ENCODE measurements at regions of chr1 and their contacts with region 1.

Region 1: GRCh38 chr1:151839457-151840405 is at the start of gene C2CD4D:
- DNase-seq: peak in 1 of 2 donors; percentile 31
- ATAC-seq: peak; percentile 45 to 69 (median 58)
- H3K4me3 ChIP-seq: peak within 1 kb of the TSS in 9 of 10 donors; percentile 36 to 58 (median 50)
- H3K27ac ChIP-seq: peak within 1 kb of the TSS in 5 of 10 donors; percentile 20 to 56 (median 47)
- H3K4me1 ChIP-seq: peaks cover 6 to 29% (median 21%) of the 10 kb centered on the region in 9 donors
- H3K27me3 ChIP-seq: peaks cover 13 to 66% (median 44%) of the 10 kb centered on the region in 7 donors
- CTCF ChIP-seq: no peak
- total RNA-seq, gene C2CD4D: not detected

Region 2: GRCh38 chr1:151443846-151444782 is 395.6 kb before region 1 on chr1:
- intact Hi-C with region 1: loop called in 1 of 10 experiments (anchors 10 kb)
- DNase-seq: peak in 1 of 2 donors; percentile 64
- ATAC-seq: peak; percentile 62 to 91 (median 88)
- H3K4me3 ChIP-seq: no peak overlapping the region
- H3K27ac ChIP-seq: peak overlapping the region in 1 of 10 donors; percentile 43
- H3K4me1 ChIP-seq: peaks cover 3 to 66% (median 40%) of the 10 kb centered on the region in 9 donors
- H3K27me3 ChIP-seq: no peaks in the 10 kb centered on the region
- CTCF ChIP-seq: peak; percentile 30 to 83 (median 68)

Region 3: GRCh38 chr1:151534665-151535278 is 305.0 kb before region 1 on chr1:
- intact Hi-C with region 1: loop called in 3 of 10 experiments (anchors 5 to 10 kb)
- DNase-seq: peak; percentile 74 to 76
- ATAC-seq: peak; percentile 65 to 79 (median 70)
- H3K4me3 ChIP-seq: no peak overlapping the region
- H3K27ac ChIP-seq: no peak overlapping the region
- H3K4me1 ChIP-seq: peaks cover 0 to 9% (median 7%) of the 10 kb centered on the region in 9 donors
- H3K27me3 ChIP-seq: no peaks in the 10 kb centered on the region
- CTCF ChIP-seq: peak; percentile 65 to 90 (median 84)

Region 4: GRCh38 chr1:151585622-151586021 is 254.1 kb before region 1 on chr1:
- intact Hi-C with region 1: loop called in 5 of 10 experiments (anchors 5 to 10 kb)
- DNase-seq: no peak
- ATAC-seq: peak in 6 of 8 donors; percentile 53 to 68 (median 64)
- H3K4me3 ChIP-seq: no peak overlapping the region
- H3K27ac ChIP-seq: peak overlapping the region in 2 of 10 donors; percentile 13 to 43
- H3K4me1 ChIP-seq: peaks cover 0 to 19% (median 0%) of the 10 kb centered on the region in 9 donors
- H3K27me3 ChIP-seq: no peaks in the 10 kb centered on the region
- CTCF ChIP-seq: no peak

Region 5: GRCh38 chr1:151693076-151693651 is 146.6 kb before region 1 on chr1:
- intact Hi-C with region 1: loop called in 2 of 10 experiments (anchors 5 to 10 kb)
- DNase-seq: no peak
- ATAC-seq: no peak
- H3K4me3 ChIP-seq: no peak overlapping the region
- H3K27ac ChIP-seq: no peak overlapping the region
- H3K4me1 ChIP-seq: peaks cover 0 to 13% (median 0%) of the 10 kb centered on the region in 9 donors
- H3K27me3 ChIP-seq: no peaks in the 10 kb centered on the region
- CTCF ChIP-seq: peak in 7 of 9 donors; percentile 44 to 61 (median 53)